ENCODE measurements at regions of chr9 and their contacts with region 1.

Region 1: GRCh38 chr9:124126571-124127289 is 115.2 kb downstream of the LHX2 start:
- DNase-seq: peak; percentile 78
- ATAC-seq: peak; percentile 80
- H3K4me3 Mint-ChIP-seq: no peak overlapping the region
- H3K27ac Mint-ChIP-seq: no peak overlapping the region
- H3K4me1 Mint-ChIP-seq: peaks cover 24% of the 10 kb centered on the region
- H3K27me3 Mint-ChIP-seq: no peaks in the 10 kb centered on the region
- CTCF ChIP-seq: peak; percentile 75

Region 2: GRCh38 chr9:123318202-123318601 is 808.5 kb before region 1 on chr9:
- CTCF ChIA-PET with region 1: no interaction called
- POLR2A ChIA-PET with region 1: no interaction called
- intact Hi-C with region 1: no loop called
- DNase-seq: no peak
- ATAC-seq: peak; percentile 30
- H3K4me3 Mint-ChIP-seq: peak overlapping the region; percentile 32
- H3K27ac Mint-ChIP-seq: no peak overlapping the region
- H3K4me1 Mint-ChIP-seq: peaks cover 69% of the 10 kb centered on the region
- H3K27me3 Mint-ChIP-seq: no peaks in the 10 kb centered on the region
- CTCF ChIP-seq: no peak

Region 3: GRCh38 chr9:123544007-123544827 is 582.5 kb before region 1 on chr9:
- CTCF ChIA-PET with region 1: no interaction called
- POLR2A ChIA-PET with region 1: interaction called, 11 read pairs
- intact Hi-C with region 1: loop called (anchors 10 kb)
- DNase-seq: no peak
- ATAC-seq: no peak
- H3K4me3 Mint-ChIP-seq: no peak overlapping the region
- H3K27ac Mint-ChIP-seq: no peak overlapping the region
- H3K4me1 Mint-ChIP-seq: no peaks in the 10 kb centered on the region
- H3K27me3 Mint-ChIP-seq: no peaks in the 10 kb centered on the region
- CTCF ChIP-seq: peak; percentile 70

Region 4: DNA sequence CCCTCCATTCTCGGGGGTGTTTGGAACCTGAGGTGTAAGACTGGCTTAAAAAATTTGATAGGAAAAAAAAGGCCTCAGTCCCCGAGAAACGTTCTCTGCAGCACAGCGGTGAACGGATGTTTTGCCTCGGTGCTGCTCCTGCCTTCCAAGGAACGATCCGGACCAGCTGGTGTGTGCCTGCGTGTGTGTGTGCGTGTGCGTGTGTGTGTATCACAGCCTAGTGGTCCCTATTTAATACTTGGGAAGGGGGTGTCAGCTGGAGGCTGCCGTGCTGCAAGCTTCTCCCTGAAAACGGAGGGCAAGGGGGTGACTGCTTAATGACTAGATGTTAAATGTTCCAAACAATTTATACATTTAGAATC is 38.3 kb before region 1 on chr9:
- CTCF ChIA-PET with region 1: no interaction called
- POLR2A ChIA-PET with region 1: no interaction called
- intact Hi-C with region 1: no loop called
- DNase-seq: no peak
- ATAC-seq: no peak
- H3K4me3 Mint-ChIP-seq: no peak overlapping the region
- H3K27ac Mint-ChIP-seq: no peak overlapping the region
- H3K4me1 Mint-ChIP-seq: peaks cover 5% of the 10 kb centered on the region
- H3K27me3 Mint-ChIP-seq: peaks cover 12% of the 10 kb centered on the region
- CTCF ChIP-seq: no peak

Region 5: DNA sequence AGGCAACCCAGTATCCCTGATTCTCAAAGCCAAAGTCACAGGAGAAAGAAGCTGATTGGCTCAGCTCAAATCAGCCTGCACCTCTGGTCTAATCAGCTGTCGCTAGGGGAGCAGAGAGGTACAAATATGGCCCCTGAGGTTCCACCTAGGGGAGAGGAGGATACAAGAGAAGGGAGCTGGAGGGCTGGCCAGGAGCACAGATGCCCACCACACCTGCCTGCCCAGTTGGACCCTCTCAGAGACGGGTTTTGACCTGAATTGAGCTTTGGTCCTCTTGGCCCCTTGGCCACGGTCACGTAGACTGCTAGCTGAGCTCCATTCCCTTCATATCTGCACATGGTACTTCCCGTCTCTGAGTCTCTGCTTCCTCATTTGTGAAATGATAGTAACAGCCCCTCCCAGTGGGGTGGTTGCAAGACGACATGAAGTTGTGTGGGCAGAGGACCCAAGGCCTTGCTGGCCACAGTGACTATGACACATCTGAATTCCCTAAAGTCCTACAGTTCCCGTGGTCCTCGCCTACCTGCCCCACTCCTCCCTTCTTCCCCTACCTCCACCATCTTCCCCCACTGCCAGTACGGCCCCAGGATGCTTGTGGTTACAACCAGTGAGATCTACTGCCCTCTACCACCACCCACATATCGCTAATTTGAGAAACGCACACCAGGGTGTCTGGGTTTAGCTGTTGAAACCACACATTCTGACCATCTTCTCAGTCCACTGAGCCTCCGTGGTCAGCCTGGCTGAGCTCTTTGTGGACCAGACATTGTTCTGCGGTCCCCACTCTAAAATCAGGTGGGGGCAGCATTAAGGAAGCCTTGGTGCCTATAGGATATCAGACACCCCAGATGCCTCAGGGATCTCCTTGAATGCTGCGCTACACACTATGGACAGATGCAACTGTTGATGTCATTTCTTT is 70.7 kb after region 1 on chr9:
- CTCF ChIA-PET with region 1: interaction called, 25 read pairs
- POLR2A ChIA-PET with region 1: interaction called, 13 read pairs
- intact Hi-C with region 1: loop called (anchors 1 kb)
- DNase-seq: peak; percentile 47
- ATAC-seq: peak; percentile 86
- H3K4me3 Mint-ChIP-seq: peak overlapping the region; percentile 72
- H3K27ac Mint-ChIP-seq: peak overlapping the region; percentile 96
- H3K4me1 Mint-ChIP-seq: peaks cover 65% of the 10 kb centered on the region
- H3K27me3 Mint-ChIP-seq: no peaks in the 10 kb centered on the region
- CTCF ChIP-seq: no peak

Region 6: DNA sequence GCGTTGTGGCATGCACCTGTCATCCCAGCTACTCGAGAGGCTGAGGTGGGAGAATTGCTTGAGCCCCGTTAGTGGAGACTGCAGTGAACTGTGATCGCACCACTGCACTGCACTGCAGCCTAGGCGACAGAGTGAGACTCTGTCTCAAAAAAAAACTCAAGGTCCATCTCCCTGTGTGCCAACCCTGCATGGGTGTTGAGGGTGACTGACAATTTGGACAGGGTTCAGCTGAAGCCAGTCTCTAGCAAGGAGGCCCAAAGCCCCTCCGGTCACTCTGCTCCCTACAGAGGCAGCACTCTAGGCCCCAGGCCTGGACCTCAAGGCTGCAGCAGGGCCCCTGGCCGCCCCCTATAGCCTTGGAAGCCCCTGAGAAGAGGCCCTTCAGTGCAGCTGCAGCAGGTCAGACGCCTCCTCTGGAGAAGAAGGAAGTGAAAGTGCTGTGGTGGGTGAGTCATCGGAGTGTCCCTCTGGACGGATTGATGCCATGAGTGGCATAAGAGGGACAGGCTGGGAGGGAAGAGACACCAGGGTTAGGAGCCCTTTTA is 91.8 kb after region 1 on chr9:
- CTCF ChIA-PET with region 1: interaction called, 32 read pairs
- POLR2A ChIA-PET with region 1: interaction called, 11 read pairs
- intact Hi-C with region 1: loop called (anchors 5 kb)
- DNase-seq: peak; percentile 78
- ATAC-seq: peak; percentile 64
- H3K4me3 Mint-ChIP-seq: peak overlapping the region; percentile 69
- H3K27ac Mint-ChIP-seq: peak overlapping the region; percentile 96
- H3K4me1 Mint-ChIP-seq: peaks cover 87% of the 10 kb centered on the region
- H3K27me3 Mint-ChIP-seq: no peaks in the 10 kb centered on the region
- CTCF ChIP-seq: no peak

Region 7: DNA sequence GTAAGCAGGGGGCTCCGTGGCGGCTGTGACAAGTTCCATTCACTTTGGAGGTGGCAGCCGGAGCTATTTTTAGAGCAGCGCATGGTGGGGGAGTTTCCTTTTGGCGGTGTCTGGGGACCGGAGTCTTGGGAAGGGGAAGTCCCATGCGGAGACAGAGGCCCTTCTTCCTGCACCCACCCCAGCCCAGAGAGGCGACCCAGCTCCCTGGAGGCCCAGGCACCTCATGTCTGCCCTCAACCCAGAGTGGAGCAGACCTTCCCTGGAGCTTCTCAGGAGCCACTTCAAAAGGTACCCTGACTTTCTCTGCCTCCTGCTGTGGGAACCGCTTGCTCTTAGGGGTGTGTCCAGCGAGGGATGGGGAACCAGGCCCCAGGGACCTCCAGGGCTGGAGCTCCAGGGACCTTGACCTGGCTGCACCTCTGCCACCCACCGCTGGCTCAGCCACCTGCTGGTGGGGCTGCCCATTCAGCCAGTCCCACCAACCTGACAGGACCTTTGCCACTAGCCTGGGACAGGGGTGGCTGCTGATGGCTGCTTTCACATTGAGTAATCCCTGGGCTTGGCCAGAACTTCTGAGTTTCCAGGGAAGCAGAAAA is 165.2 kb after region 1 on chr9:
- CTCF ChIA-PET with region 1: interaction called, 45 read pairs
- POLR2A ChIA-PET with region 1: interaction called, 7 read pairs
- intact Hi-C with region 1: loop called (anchors 1 kb)
- DNase-seq: peak; percentile 62
- ATAC-seq: peak; percentile 59
- H3K4me3 Mint-ChIP-seq: peak overlapping the region; percentile 68
- H3K27ac Mint-ChIP-seq: peak overlapping the region; percentile 85
- H3K4me1 Mint-ChIP-seq: peaks cover 96% of the 10 kb centered on the region
- H3K27me3 Mint-ChIP-seq: no peaks in the 10 kb centered on the region
- CTCF ChIP-seq: no peak

Region 8: DNA sequence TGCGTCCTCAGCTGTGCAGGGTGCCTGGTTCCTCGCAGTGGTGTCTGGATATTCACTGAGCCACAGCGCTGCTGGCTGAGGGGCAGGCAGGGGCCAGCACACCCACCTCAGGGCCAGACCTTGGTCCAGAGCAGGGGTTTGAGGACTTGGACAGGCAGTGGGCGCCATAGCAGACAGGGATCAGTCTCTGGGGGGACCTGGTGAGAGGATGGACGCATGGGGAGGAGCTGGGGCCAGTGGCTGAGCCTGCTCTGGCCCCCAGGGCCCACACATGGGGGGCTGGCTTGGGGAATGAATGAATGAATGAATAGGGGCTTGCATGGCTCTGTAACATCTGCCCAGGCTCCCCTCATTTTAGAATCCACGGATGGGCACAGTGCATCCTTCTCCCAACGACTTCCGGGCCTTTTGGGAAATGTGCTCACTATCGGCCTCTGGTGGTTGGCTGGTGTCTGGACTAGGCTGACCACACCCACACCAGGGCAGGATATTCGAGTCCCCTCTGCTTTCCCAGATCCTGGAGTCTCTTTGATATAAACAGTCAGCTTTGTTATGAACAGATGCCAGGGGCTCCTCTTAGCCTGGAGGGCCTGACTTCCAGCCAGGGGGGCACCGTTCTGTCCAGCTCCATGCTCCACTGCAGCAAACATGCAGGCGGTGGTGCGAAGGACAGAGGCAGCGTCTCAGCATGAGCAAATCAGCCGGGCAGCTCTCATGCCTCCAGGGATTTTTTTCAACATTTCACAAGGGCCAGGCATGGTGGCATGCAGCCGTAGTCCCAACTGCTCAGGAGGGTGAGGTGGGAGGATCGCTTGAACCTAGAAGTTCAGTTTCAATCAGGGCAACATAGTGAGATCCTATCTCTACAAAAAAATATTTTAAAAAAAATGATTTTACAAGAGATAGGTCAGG is 193.6 kb after region 1 on chr9:
- CTCF ChIA-PET with region 1: interaction called, 59 read pairs
- POLR2A ChIA-PET with region 1: no interaction called
- intact Hi-C with region 1: loop called (anchors 1 kb)
- DNase-seq: peak; percentile 36
- ATAC-seq: peak; percentile 58
- H3K4me3 Mint-ChIP-seq: no peak overlapping the region
- H3K27ac Mint-ChIP-seq: peak overlapping the region; percentile 12
- H3K4me1 Mint-ChIP-seq: peaks cover 35% of the 10 kb centered on the region
- H3K27me3 Mint-ChIP-seq: no peaks in the 10 kb centered on the region
- CTCF ChIP-seq: no peak

Region 9: DNA sequence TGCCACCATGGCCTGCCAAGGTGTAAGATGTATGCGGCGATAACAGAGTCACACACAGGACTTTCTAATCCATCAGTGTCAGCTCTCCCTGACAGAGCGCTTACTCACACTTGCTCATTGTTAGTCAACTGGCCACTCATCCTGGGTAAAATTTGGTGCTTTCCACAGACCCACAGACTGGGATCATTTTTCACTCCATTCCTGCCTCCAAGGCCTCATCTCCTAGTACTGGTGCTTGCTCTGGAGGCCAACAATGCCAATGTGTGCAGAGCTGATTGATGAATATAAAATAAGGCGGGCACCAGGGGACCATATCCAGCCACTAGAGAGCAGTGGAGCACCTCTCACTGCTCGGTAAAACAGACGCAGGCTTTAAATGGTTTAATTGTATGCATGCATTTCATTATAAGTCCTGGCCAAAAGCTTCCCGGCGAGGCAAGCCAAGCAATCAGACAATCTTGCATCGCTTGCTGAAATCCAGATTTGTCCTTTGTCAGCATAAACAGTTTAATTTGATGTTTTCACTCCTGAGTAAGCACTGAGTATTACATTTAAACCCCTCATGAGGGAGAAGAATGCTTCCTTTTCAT is 266.2 kb after region 1 on chr9:
- CTCF ChIA-PET with region 1: interaction called, 15 read pairs
- POLR2A ChIA-PET with region 1: no interaction called
- intact Hi-C with region 1: loop called (anchors 1 kb)
- DNase-seq: no peak
- ATAC-seq: no peak
- H3K4me3 Mint-ChIP-seq: no peak overlapping the region
- H3K27ac Mint-ChIP-seq: no peak overlapping the region
- H3K4me1 Mint-ChIP-seq: peaks cover 20% of the 10 kb centered on the region
- H3K27me3 Mint-ChIP-seq: no peaks in the 10 kb centered on the region
- CTCF ChIP-seq: no peak